ENCODE measurements at regions of chr19 and their contacts with region 1.

Region 1: GRCh38 chr19:10230861-10231611 is at the start of gene S1PR2:
- DNase-seq: peak; percentile 88
- CTCF ChIP-seq: no peak

Region 2: DNA sequence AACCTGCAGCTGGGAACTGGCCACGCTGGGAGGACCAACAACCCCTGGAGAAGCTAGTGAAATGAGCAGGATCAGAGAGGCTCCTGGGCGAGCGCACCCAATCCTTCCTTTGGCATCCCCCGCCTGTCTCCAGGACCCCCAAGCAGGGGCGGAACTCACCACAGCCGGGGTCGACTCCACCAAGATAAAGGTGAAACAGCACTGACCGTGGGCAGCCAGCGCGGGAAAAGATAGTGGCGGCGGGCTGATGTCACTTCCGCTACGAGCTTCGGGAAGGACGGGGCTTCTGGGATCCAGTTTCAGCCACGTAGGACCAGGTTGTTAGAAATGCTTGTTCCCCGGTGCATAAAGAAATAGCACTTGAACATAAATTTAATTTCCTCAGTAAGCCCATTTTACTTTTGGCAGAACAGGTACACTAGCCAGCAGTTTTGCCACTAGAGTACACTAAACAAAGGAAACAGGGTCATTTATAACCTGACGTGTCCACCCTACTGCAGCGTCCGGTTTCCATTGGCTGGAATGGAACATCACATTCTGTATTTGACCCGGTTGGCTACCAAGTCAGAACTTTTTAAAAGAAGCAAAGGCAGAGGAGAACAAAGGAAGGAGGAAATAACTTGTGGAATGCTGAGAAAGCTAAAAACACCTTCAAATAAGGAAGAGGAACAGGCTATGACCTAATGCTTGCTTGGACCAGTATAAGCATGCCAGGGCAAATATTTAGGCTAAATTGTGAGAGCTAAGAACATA is 530.6 kb before region 1 on chr19:
- CTCF ChIA-PET with region 1: no interaction called
- POLR2A ChIA-PET with region 1: no interaction called
- DNase-seq: no peak
- CTCF ChIP-seq: no peak

Region 3: DNA sequence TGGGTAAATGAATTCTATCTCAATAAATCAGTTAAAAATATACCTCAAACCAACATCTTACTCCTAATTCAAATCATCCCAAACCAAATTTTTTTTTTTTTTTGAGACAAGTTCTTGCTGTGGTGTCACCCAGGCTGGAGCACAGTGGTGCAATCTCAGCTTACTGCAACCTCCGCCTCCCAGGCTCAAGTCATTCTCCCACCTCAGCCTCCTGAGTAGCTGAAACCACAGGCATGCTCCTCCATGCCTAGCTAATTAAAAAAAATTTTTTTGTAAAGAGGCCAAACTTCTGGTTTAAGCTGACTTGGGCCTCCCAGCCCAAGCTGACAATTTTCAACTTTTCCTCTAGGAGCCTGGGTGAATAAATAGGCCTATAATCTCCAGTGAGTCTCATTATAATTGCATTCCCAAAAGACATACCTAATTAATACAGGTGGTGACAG is 272.6 kb before region 1 on chr19:
- CTCF ChIA-PET with region 1: no interaction called
- POLR2A ChIA-PET with region 1: no interaction called
- DNase-seq: no peak
- CTCF ChIP-seq: no peak

Region 4: GRCh38 chr19:10173257-10173926 is 57.6 kb before region 1 on chr19:
- CTCF ChIA-PET with region 1: no interaction called
- POLR2A ChIA-PET with region 1: no interaction called
- DNase-seq: no peak
- CTCF ChIP-seq: no peak

Region 5: GRCh38 chr19:10184636-10185035 is 46.4 kb before region 1 on chr19:
- CTCF ChIA-PET with region 1: no interaction called
- POLR2A ChIA-PET with region 1: no interaction called
- DNase-seq: no peak
- CTCF ChIP-seq: no peak

Region 6: GRCh38 chr19:10245189-10245939 is 14.3 kb after region 1 on chr19:
- CTCF ChIA-PET with region 1: interaction called, 72 read pairs
- POLR2A ChIA-PET with region 1: interaction called, 3 read pairs
- DNase-seq: peak; percentile 53
- CTCF ChIP-seq: no peak

Measured in GM10248 (cell line).